SK-N-SH (cell line): ENCODE measurements at regions of chr17 and their contacts with region 1.

Region 1: GRCh38 chr17:45640141-45640850 is 143.8 kb upstream of the CRHR1 start:
- DNase-seq: peak; percentile 82
- H3K4me3 ChIP-seq: no peak overlapping the region; a peak in 1 of 4 replicates
- H3K27ac ChIP-seq: no peak overlapping the region
- H3K4me1 ChIP-seq: no peaks in the 10 kb centered on the region
- H3K27me3 ChIP-seq: no peaks in the 10 kb centered on the region
- CTCF ChIP-seq: peak; percentile 98
- EP300 ChIP-seq: no peak
- RAD21 ChIP-seq: peak; percentile 95

Region 2: GRCh38 chr17:45628019-45628418 is 12.3 kb before region 1 on chr17:
- CTCF ChIA-PET with region 1: interaction called, 27 read pairs
- POLR2A ChIA-PET with region 1: no interaction called
- DNase-seq: no peak
- H3K4me3 ChIP-seq: no peak overlapping the region
- H3K27ac ChIP-seq: no peak overlapping the region
- H3K4me1 ChIP-seq: no peaks in the 10 kb centered on the region
- H3K27me3 ChIP-seq: no peaks in the 10 kb centered on the region
- CTCF ChIP-seq: no peak
- EP300 ChIP-seq: no peak
- RAD21 ChIP-seq: no peak

Region 3: GRCh38 chr17:45742251-45742650 is 102.0 kb after region 1 on chr17:
- CTCF ChIA-PET with region 1: no interaction called
- POLR2A ChIA-PET with region 1: no interaction called
- DNase-seq: no peak
- H3K4me3 ChIP-seq: no peak overlapping the region
- H3K27ac ChIP-seq: no peak overlapping the region
- H3K4me1 ChIP-seq: peaks cover 0 to 7% of the 10 kb centered on the region in 2 experiments; a peak in 1 of 4 replicates
- H3K27me3 ChIP-seq: 0 out of 2 replicates have a peak, but pooled peaks cover 35% of the 10 kb centered on the region
- CTCF ChIP-seq: no peak
- EP300 ChIP-seq: no peak
- RAD21 ChIP-seq: no peak

Region 4: GRCh38 chr17:45823598-45823997 is 183.3 kb after region 1 on chr17:
- CTCF ChIA-PET with region 1: interaction called, 211 read pairs
- POLR2A ChIA-PET with region 1: interaction called, 3 read pairs
- DNase-seq: no peak
- H3K4me3 ChIP-seq: no peak overlapping the region
- H3K27ac ChIP-seq: no peak overlapping the region
- H3K4me1 ChIP-seq: peaks cover 0 to 55% of the 10 kb centered on the region in 2 experiments; a peak in 3 of 4 replicates
- H3K27me3 ChIP-seq: no peaks in the 10 kb centered on the region
- CTCF ChIP-seq: no peak
- EP300 ChIP-seq: no peak
- RAD21 ChIP-seq: no peak

Region 5: DNA sequence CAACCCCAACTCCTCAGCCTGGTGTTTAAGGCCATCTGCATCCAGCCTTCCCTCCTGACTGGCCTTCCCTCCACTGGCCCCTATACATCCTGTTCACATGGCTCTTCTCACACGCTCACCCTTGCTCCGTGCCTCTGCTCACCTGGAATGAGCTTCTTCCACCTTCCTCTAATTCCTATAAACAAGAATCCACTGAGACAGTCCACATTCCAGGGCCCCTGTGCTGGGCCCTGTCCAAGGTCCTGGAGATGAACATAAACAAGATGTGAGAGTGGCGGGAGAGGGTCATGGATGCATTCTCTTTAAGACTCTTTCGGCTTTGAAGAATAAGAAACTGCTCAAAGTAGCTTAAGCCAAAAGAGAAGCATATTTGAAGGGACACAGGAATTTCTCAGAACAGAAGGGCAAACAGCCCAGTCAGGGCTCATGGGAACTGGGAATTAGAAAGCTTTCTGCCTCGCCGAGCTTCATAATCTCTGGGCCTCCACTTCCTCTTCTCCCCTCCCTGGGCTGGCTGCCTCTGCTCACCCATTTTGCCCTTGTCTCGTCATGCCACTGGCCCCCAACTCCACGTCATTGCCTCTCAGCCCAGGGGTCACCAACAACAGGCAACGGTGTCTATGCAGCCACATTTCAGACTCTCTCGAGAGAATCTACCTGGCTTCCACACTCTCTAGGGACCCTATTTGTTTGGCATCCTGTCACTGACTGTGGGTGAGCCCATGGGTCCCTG is 217.8 kb after region 1 on chr17:
- CTCF ChIA-PET with region 1: interaction called, 58 read pairs
- POLR2A ChIA-PET with region 1: no interaction called
- DNase-seq: no peak
- H3K4me3 ChIP-seq: no peak overlapping the region
- H3K27ac ChIP-seq: no peak overlapping the region
- H3K4me1 ChIP-seq: peaks cover 0 to 12% of the 10 kb centered on the region in 2 experiments; a peak in 1 of 4 replicates
- H3K27me3 ChIP-seq: 0 out of 2 replicates have a peak, but pooled peaks cover 8% of the 10 kb centered on the region
- CTCF ChIP-seq: no peak
- EP300 ChIP-seq: no peak
- RAD21 ChIP-seq: no peak